ENCODE measurements at regions of chr2 and their contacts with region 1.

Region 1: GRCh38 chr2:223797811-223798721 is 39.3 kb downstream of the AP1S3 start:
- DNase-seq: no peak
- H3K4me3 ChIP-seq: no peak overlapping the region
- H3K27ac ChIP-seq: no peak overlapping the region
- H3K4me1 ChIP-seq: peaks cover 0 to 3% (median 0%) of the 10 kb centered on the region in 4 donors
- H3K27me3 ChIP-seq: no peaks in the 10 kb centered on the region
- CTCF ChIP-seq: peak; percentile 42 to 55 (median 45)
- EP300 ChIP-seq: no peak
- POLR2A ChIP-seq: no peak

Region 2: DNA sequence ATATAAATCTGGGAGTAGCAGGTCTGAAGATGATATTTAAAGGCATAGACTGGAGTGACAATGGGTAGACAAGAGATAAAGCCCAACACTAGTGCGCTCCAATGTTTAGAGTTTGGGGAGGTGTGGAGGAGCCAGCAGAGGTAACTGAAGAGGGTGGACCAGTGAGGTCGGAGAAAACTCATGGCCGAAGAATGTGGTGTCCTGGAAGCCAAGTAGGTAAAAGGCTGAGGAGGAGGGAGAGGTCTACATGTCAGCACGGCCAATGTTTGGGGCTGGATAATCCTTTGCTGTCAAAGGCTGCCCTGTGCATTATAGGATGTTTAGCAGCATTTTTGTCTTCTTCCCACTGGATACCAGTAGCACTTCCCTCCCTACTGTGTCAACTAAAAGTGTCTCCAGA is 824.8 kb before region 1 on chr2:
- in situ Hi-C with region 1: loop called in 2 of 4 experiments (anchors 25 kb)
- intact Hi-C with region 1: loop called (anchors 5 kb)
- DNase-seq: no peak
- H3K4me3 ChIP-seq: no peak overlapping the region
- H3K27ac ChIP-seq: no peak overlapping the region
- H3K4me1 ChIP-seq: peaks cover 0 to 4% (median 1%) of the 10 kb centered on the region in 4 donors
- H3K27me3 ChIP-seq: no peaks in the 10 kb centered on the region
- CTCF ChIP-seq: no peak
- EP300 ChIP-seq: no peak
- POLR2A ChIP-seq: no peak

Region 3: DNA sequence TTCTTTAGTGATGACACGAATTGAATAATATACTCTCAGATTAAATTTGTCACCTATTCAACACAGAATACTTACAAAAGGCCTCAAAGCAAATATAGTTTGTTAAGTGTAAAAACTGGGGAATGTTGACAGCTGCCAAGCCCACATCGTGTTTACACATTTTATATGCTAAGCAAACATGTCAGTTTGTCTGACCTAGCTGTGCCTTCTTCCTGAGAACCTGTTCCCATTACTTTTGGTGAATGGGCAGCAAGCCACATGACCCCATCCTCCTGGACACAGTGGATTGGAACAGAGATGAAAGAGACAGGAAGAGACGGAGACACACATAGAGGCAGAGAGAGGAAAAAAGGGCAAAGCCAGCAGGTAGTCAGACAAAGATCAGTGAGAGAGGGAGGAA is 810.0 kb after region 1 on chr2:
- in situ Hi-C with region 1: no loop called
- intact Hi-C with region 1: no loop called
- DNase-seq: peak; percentile 16
- H3K4me3 ChIP-seq: no peak overlapping the region
- H3K27ac ChIP-seq: no peak overlapping the region
- H3K4me1 ChIP-seq: peaks cover 0 to 7% (median 2%) of the 10 kb centered on the region in 4 donors
- H3K27me3 ChIP-seq: no peaks in the 10 kb centered on the region
- CTCF ChIP-seq: no peak
- EP300 ChIP-seq: no peak
- POLR2A ChIP-seq: no peak

Measured in transverse colon (tissue), 4 donors.